ENCODE measurements at regions of chr2 and their contacts with region 1.

Region 1: DNA sequence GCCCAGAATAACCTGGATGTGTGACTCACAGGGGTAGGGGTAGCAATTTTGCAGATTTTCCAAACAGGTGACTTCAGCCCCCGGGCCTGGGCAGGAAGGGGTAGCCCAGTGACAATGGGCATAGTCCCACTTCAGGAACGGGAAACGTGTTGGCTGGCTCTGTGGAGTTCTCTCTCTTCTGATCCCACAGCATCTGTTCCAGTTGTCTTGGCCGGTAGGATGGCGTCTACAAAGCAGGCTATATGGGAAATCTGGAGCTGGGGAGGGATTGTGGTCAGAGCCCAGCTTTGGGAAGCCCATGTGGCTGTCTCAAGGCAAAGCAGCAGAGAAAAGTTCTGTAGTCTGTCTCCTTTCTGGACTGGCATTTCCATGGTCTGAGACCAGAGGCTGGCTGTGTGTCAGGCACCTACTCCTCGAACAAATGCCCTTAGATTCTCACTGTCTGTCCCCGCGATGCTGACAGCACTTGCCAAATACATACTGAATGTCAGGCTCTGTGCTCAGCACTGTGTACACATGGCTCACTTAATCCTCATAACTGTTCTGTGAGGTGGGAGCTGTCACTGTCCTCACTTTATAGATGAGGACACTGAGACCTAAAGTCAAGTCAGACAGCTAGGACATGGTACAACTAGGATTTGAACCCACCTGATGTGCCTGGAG is 17.9 kb upstream of the TMEM214 start:
- DNase-seq: no peak
- H3K4me3 ChIP-seq: no peak overlapping the region
- H3K27ac ChIP-seq: no peak overlapping the region
- H3K4me1 ChIP-seq: peaks cover 3% of the 10 kb centered on the region
- H3K27me3 ChIP-seq: no peaks in the 10 kb centered on the region
- CTCF ChIP-seq: no peak
- POLR2A ChIP-seq: no peak

Region 2: DNA sequence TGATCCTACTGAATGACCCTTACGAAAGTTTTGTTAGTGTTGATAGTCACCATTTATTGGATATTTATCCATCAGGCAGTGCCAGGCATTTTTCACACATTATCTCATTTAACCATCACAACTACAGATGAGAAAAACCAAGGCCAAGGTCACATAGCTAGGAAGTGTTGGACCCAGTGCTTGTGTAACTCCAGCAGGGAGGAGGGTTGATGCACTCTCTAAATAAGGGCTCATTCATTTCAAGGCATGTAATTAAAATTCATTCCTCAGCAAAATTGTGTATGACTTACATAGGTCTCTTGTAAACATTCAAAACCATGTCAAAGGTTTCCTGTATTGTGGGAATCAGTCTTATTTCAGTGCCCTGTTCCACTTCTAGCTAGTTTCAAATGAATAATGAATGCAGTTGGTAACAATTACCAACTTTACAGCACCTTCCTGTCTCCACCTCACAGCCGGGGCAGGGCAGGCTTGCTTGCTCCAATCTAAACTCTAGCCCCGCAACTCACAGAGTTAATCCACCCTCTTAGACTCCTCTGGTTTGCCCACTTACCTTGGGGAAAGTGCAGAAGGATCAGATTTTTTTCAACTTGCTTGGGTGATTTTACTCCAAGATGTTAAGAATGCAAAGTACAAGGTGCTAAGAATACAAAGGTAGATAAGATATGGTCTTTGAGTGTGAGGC is 50.3 kb before region 1 on chr2:
- intact Hi-C with region 1: loop called (anchors 5 kb)
- DNase-seq: no peak
- H3K4me3 ChIP-seq: no peak overlapping the region
- H3K27ac ChIP-seq: no peak overlapping the region
- H3K4me1 ChIP-seq: peaks cover 4% of the 10 kb centered on the region
- H3K27me3 ChIP-seq: no peaks in the 10 kb centered on the region
- CTCF ChIP-seq: no peak
- POLR2A ChIP-seq: no peak

Measured in testis (tissue), 5 donors.